ENCODE measurements at regions of chr6 and their contacts with region 1.

Region 1: GRCh38 chr6:70566751-70567382 is at the start of gene SDHAF4:
- DNase-seq: peak; percentile 83 to 91
- ATAC-seq: peak; percentile 97
- H3K4me3 ChIP-seq: peak within 1 kb of the TSS; percentile 76 to 94 (median 90)
- H3K27ac ChIP-seq: peak within 1 kb of the TSS; percentile 87 to 96 (median 92)
- H3K4me1 ChIP-seq: peaks cover 0 to 2% of the 10 kb centered on the region in 2 donors
- H3K27me3 ChIP-seq: no peaks in the 10 kb centered on the region
- CTCF ChIP-seq: peak in 2 of 5 experiments; percentile 16 to 42
- POLR2A ChIP-seq: peak; percentile 69 to 74
- total RNA-seq, gene SDHAF4: 2.6 to 10.0 (median 6.2) TPM

Region 2: GRCh38 chr6:69643688-69644087 is 923.2 kb before region 1 on chr6:
- in situ Hi-C with region 1: no loop called
- intact Hi-C with region 1: no loop called
- DNase-seq: no peak
- ATAC-seq: no peak
- H3K4me3 ChIP-seq: no peak overlapping the region
- H3K27ac ChIP-seq: no peak overlapping the region
- H3K4me1 ChIP-seq: no peaks in the 10 kb centered on the region
- H3K27me3 ChIP-seq: no peaks in the 10 kb centered on the region
- CTCF ChIP-seq: no peak
- POLR2A ChIP-seq: no peak

Region 3: DNA sequence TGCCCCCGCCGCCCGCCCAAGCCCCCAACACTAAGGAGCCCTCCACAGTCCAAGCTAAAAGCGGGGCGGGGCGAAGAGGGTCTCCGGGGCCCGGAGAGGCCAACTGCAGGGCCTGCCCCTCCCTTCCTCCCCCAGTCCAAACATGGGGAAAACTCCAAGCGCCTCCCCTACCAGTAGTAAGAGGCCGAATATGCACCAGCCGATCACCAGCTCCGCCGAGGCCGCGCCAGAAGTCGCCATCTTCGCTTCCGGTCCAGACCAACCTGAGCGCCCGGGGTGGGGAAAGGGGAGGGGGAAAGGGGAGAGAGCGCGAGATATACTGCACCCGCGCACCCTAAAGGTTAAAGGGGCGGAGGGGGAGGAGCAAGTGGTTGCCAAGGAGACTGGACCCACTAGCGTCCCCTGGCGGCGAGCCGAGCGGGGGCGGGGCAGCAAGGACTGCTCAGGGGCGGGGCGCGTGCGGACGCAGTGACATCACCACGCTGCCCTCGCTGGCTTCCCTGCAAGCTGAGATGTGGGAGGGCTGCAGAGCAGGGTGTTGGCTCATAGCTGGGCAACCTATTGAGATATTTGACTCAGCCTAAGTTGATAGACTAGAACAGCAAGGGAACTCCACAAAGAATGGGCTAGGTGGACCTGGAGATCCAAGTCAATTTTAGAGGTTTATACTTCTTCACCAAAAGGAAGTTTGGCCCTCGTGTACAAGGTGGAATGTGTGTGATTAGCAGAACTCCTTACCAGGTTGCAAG is 770.1 kb before region 1 on chr6 and contains the start of gene LMBRD1:
- in situ Hi-C with region 1: loop called in 1 of 4 experiments (anchors 25 kb)
- intact Hi-C with region 1: no loop called
- DNase-seq: peak; percentile 91 to 96
- ATAC-seq: peak; percentile 86 to 89
- H3K4me3 ChIP-seq: peak within 1 kb of the TSS; percentile 76 to 99 (median 86)
- H3K27ac ChIP-seq: peak within 1 kb of the TSS; percentile 93 to 99 (median 97)
- H3K4me1 ChIP-seq: peaks cover 21 to 31% of the 10 kb centered on the region in 2 donors
- H3K27me3 ChIP-seq: no peaks in the 10 kb centered on the region
- CTCF ChIP-seq: peak; percentile 21 to 73 (median 66)
- POLR2A ChIP-seq: peak in 1 of 2 donors; percentile 28
- total RNA-seq, gene LMBRD1: 24.4 to 32.9 (median 28.9) TPM

Region 4: GRCh38 chr6:70413114-70413991 is 153.5 kb before region 1 on chr6 and contains the start of gene FAM135A:
- in situ Hi-C with region 1: no loop called
- intact Hi-C with region 1: loop called (anchors 5 kb)
- DNase-seq: peak; percentile 91 to 97
- ATAC-seq: peak; percentile 95 to 98
- H3K4me3 ChIP-seq: peak within 1 kb of the TSS; percentile 79 to 93 (median 91)
- H3K27ac ChIP-seq: peak within 1 kb of the TSS; percentile 80 to 86 (median 84)
- H3K4me1 ChIP-seq: peaks cover 14 to 15% of the 10 kb centered on the region in 2 donors
- H3K27me3 ChIP-seq: no peaks in the 10 kb centered on the region
- CTCF ChIP-seq: no peak
- POLR2A ChIP-seq: peak; percentile 58 to 63
- total RNA-seq, gene FAM135A: 9.3 to 18.4 (median 12.9) TPM

Region 5: GRCh38 chr6:70552974-70553373 is 13.9 kb before region 1 on chr6:
- in situ Hi-C with region 1: no loop called
- intact Hi-C with region 1: loop called (anchors 2 kb)
- DNase-seq: no peak
- ATAC-seq: peak; percentile 31 to 54
- H3K4me3 ChIP-seq: peak overlapping the region in 2 of 4 donors; percentile 29 to 46
- H3K27ac ChIP-seq: peak overlapping the region; percentile 70 to 79 (median 76)
- H3K4me1 ChIP-seq: peaks cover 0 to 17% of the 10 kb centered on the region in 2 donors
- H3K27me3 ChIP-seq: no peaks in the 10 kb centered on the region
- CTCF ChIP-seq: no peak
- POLR2A ChIP-seq: no peak

Region 6: DNA sequence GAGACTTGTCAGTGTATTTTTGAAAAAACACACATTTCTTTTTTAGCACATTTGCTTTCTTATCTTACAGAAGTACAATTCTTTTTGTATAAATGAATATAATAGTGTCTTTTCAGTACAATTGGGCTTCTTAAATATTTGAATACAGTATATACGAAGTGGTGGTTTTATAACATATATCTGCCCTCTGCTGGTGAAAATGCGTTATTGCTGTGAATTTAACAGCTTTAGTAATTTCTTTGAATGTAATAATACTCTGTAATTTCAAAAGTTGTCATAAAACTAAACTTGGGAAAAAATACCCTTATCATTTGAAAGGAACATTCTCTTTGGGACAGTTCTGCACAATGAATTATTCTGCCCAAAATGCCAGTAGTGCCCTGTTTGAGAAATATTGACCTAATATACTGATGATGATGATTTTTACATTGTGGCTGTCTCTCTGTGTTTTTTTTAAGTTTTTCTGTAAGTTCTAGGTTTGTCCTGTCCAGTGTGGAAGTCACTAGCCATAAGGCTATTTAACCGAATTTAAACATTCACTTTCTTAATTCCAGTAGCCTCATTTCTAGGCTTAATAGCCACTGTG is 119.8 kb after region 1 on chr6:
- in situ Hi-C with region 1: no loop called
- intact Hi-C with region 1: loop called (anchors 5 kb)
- DNase-seq: no peak
- ATAC-seq: no peak
- H3K4me3 ChIP-seq: no peak overlapping the region
- H3K27ac ChIP-seq: peak overlapping the region; percentile 78 to 85 (median 80)
- H3K4me1 ChIP-seq: peaks cover 37 to 49% of the 10 kb centered on the region in 2 donors
- H3K27me3 ChIP-seq: no peaks in the 10 kb centered on the region
- CTCF ChIP-seq: peak; percentile 68 to 88 (median 79)
- POLR2A ChIP-seq: no peak

Region 7: DNA sequence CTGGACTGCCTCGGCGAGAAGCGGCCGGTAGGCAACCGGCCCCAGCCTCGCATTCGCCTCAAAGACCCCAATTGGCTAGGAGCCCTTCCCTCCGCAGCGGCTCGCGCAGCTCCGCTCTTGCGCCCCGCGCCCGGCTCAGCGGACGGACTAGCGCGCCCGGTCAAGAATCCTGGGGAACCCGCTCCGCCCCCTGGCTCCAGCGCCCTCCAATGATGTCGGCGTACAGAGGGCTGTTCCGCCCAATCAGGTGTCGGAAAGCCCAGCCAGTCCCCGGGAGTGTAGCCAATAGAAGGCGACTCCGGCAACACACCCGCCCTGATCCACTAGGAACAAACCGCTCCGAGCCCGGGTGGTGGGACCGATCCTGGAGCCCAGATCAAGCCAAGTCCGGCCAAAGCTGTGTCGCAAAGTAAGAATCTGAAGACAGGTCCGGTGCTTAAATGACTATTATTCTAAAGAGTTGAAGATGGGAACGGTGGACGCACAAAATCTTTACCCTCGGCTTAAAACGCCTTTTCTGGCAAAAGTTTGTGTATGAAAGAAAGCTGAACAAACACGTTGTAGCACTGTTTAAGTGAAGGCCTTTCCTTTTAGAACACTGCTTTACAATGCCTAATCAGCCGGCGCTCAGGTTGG is 853.9 kb after region 1 on chr6:
- in situ Hi-C with region 1: loop called in 1 of 4 experiments (anchors 25 kb)
- intact Hi-C with region 1: no loop called
- DNase-seq: peak; percentile 97 to 98
- ATAC-seq: peak; percentile 92 to 93
- H3K4me3 ChIP-seq: peak overlapping the region; percentile 85 to 95 (median 87)
- H3K27ac ChIP-seq: peak overlapping the region; percentile 96 to 98 (median 98)
- H3K4me1 ChIP-seq: peaks cover 15 to 26% of the 10 kb centered on the region in 2 donors
- H3K27me3 ChIP-seq: no peaks in the 10 kb centered on the region
- CTCF ChIP-seq: peak in 1 of 5 experiments; percentile 11
- POLR2A ChIP-seq: peak; percentile 98 to 99

Measured in gastrocnemius medialis (tissue), 4 donors.